ENCODE measurements at regions of chr12 and their contacts with region 1.

Region 1: GRCh38 chr12:110100315-110100970 is 23.7 kb upstream of the IFT81 start:
- DNase-seq: peak; percentile 81
- CTCF ChIP-seq: peak; percentile 94

Region 2: DNA sequence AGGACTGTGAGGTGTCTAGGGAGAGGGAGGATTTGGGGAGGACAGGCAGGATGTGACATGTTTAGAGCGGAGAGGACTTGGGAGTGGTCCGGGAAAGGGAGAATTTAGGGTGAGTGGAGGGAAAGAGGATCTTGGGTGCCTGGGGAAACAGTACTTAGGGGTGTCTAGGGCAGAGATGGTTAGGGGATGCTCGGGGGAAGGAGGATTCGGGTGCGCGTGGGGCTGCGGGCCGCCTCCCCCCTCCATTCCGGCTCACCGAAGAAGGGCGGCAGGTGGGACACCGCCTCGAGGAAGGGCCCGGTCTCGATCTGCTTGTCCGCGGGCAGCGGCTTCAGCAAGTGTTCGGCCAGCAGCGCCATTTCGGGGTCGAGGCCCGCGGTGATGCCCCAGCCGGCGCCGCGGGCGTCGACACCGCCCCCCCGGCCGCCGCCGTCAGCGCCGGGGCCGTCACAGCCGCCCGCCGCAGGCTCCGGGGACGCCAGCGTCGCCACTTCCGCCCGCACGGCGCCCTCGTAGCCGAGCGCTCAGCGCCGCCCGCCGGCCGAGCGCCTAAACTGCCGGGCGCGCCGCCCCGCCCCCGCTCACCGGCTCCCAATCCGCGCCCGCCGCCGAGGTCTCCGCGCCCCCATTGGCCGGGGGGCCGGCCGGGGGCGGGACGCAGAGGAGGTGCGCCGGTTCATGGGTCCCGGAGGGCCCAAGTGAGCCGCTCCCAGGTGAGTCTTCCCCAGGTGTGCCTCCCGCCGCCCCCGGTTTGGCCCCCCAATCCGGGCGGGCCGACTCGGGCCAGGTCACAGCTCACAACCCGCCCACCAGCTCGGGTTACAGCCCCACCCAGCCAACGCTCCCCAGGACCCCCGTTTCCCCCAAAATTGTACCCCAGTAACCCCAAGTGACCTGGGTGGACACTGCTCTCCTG is 220.2 kb before region 1 on chr12 and contains the start of gene GLTP:
- CTCF ChIA-PET with region 1: no interaction called
- POLR2A ChIA-PET with region 1: no interaction called
- DNase-seq: peak; percentile 98
- CTCF ChIP-seq: peak; percentile 93

Region 3: GRCh38 chr12:110088936-110089335 is 11.5 kb before region 1 on chr12:
- CTCF ChIA-PET with region 1: interaction called, 14 read pairs
- POLR2A ChIA-PET with region 1: no interaction called
- DNase-seq: no peak
- CTCF ChIP-seq: no peak

Region 4: GRCh38 chr12:110114528-110114937 is 14.1 kb after region 1 on chr12:
- CTCF ChIA-PET with region 1: interaction called, 14 read pairs
- POLR2A ChIA-PET with region 1: no interaction called
- DNase-seq: no peak
- CTCF ChIP-seq: no peak

Region 5: DNA sequence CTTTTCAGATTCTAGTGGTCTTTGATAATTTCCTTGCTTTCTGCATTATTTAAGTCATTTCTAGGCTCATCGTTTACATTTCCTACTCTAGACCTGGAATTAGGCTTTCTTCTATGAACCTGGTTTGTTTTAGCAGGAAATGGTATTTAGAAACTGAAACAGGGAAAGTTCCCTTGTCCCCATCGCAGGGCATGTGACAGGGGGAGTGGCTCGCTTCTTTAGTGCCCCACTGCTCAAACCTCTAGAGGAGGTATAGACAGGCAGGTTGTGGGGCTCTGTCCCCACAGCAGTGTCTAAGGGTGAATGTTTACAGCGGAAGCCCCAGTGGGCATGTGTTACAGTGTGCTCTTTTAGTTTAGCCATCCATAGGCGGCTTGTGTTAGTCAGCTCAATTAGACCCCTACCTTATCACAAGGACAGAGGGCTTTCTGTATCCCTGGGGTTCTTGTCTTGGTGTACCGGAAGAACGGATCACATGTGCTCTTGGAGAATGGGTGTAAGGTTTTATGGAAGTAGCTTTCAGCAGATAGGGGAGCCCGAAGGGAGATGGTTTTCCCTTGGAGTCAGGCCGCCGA is 48.7 kb after region 1 on chr12:
- CTCF ChIA-PET with region 1: no interaction called
- POLR2A ChIA-PET with region 1: no interaction called
- DNase-seq: no peak
- CTCF ChIP-seq: no peak

Measured in GM10248 (cell line).